ENCODE measurements at regions of chr15 and their contacts with region 1.

Region 1: DNA sequence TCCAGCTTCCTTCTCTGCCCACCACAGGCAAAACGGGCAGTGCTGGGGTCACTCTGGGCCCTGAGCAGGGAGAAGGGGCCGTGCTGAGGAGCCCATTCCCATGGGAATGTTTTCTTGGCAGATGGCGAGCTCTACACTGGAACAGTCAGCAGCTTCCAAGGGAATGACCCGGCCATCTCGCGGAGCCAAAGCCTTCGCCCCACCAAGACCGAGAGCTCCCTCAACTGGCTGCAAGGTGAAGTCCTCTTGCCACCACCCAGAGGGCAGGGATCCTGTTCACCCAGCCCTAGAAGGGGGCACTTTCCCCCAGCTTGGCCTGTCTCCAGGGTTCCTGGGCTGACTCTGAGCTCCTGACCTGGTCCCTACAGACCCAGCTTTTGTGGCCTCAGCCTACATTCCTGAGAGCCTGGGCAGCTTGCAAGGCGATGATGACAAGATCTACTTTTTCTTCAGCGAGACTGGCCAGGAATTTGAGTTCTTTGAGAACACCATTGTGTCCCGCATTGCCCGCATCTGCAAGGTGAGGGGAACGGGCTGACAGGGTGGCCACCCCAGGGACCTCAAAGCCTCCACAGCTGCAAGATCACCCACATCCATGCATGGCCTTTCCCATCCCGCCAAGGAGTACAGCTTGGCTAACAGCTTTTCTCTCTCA is 12.4 kb downstream of the CIB1 start:
- DNase-seq: peak; percentile 81
- H3K4me3 ChIP-seq: no peak overlapping the region
- H3K27ac ChIP-seq: peak overlapping the region; percentile 14
- H3K4me1 ChIP-seq: no peaks in the 10 kb centered on the region
- H3K27me3 ChIP-seq: no peaks in the 10 kb centered on the region
- CTCF ChIP-seq: peak; percentile 61

Region 2: GRCh38 chr15:89893696-89894455 is 327.5 kb before region 1 on chr15 and contains the start of gene AP3S2:
- intact Hi-C with region 1: no loop called
- DNase-seq: peak; percentile 94
- H3K4me3 ChIP-seq: peak within 1 kb of the TSS; percentile 79
- H3K27ac ChIP-seq: peak within 1 kb of the TSS; percentile 94
- H3K4me1 ChIP-seq: peaks cover 4% of the 10 kb centered on the region
- H3K27me3 ChIP-seq: no peaks in the 10 kb centered on the region
- CTCF ChIP-seq: no peak
- total RNA-seq, gene AP3S2: 44.5 to 48.6 TPM

Region 3: GRCh38 chr15:90143166-90143655 is 78.2 kb before region 1 on chr15:
- intact Hi-C with region 1: loop called (anchors 5 kb)
- DNase-seq: peak; percentile 86
- H3K4me3 ChIP-seq: no peak overlapping the region
- H3K27ac ChIP-seq: no peak overlapping the region
- H3K4me1 ChIP-seq: peaks cover 7% of the 10 kb centered on the region
- H3K27me3 ChIP-seq: no peaks in the 10 kb centered on the region
- CTCF ChIP-seq: peak; percentile 82